SK-N-SH (cell line): ENCODE measurements at regions of chr2 and their contacts with region 1.

Region 1: GRCh38 chr2:164841719-164842623 is at the start of gene COBLL1:
- DNase-seq: peak; percentile 82
- H3K4me3 ChIP-seq: peak within 1 kb of the TSS; percentile 72 to 92
- H3K27ac ChIP-seq: peak within 1 kb of the TSS; percentile 81 to 85
- H3K4me1 ChIP-seq: peaks cover 8 to 10% of the 10 kb centered on the region in 2 experiments; a peak in 3 of 4 replicates
- H3K27me3 ChIP-seq: no peaks in the 10 kb centered on the region
- CTCF ChIP-seq: peak; percentile 80
- EP300 ChIP-seq: no peak
- RAD21 ChIP-seq: peak; percentile 50
- polyA plus RNA-seq, gene COBLL1: 3.1 and 4.9 TPM in 2 replicates

Region 2: DNA sequence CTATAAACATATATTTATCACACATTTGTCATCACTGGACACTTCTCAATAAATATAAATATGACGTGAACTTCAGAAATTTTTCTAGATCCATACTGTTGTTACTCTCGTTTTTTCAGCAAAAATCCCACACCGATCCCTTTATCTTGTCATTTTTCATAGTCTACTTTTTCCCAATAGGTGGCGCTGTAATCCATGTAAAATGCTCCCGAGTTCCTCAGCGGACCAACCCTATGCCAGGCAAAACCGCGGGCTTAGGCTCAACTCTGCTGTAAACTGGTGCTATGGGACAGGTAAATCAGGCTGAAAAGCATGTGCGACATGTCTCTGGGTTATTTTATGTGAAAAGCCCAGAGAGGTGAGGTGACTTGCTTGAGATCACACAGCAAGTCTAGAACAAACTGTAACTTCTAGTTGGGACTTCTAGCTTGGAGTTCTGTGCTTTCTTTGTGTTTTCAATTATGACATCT is 104.3 kb before region 1 on chr2:
- CTCF ChIA-PET with region 1: interaction called, 24 read pairs
- POLR2A ChIA-PET with region 1: no interaction called
- DNase-seq: peak; percentile 57
- H3K4me3 ChIP-seq: no peak overlapping the region; a peak in 1 of 4 replicates
- H3K27ac ChIP-seq: no peak overlapping the region
- H3K4me1 ChIP-seq: peaks cover 2 to 5% of the 10 kb centered on the region in 2 experiments; a peak in 2 of 4 replicates
- H3K27me3 ChIP-seq: no peaks in the 10 kb centered on the region
- CTCF ChIP-seq: peak; percentile 85
- EP300 ChIP-seq: no peak
- RAD21 ChIP-seq: peak; percentile 92

Region 3: DNA sequence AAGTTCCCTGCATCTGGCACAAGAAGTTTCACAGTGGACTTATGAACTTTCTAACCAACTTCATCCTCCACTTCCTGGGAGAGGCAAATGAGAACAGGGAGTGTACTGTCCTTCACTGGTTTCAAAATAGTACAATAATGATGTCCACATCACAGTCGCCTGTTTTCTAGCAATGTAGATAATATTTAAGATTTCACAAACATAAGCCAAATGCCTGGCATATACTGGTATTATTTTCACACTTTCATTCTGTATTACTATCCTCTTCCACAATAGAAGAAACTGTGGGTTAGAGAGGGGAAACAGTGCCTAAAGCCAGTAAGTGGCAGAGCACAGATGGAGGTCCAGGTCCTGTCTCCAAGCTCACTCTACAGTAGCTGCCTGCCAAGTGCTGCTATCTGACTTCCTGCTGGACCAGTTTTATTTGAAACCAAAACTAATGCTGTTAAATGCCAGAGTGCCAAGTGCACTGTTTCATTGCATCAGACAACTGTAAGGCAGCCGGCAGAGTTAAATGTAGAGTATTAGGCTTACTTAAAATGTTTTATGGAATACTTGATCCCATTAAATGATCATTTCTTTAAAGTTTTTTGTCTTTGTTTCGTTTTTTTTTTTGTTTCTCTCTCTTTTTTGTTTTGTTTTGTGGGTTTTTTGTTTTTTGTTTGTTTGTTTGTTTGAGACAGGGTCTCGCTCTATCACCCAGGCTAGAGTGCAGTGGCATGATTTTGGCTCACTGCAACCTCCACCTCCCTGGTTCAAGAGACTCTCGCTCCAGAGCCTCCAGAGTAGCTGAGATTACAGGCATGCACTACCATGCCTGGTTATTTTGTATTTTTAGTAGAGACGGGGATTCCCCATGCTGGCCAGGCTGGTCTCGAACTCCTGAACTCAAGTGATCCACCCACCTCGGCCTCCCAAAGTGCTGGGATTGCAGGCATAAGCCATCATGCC is 15.4 kb before region 1 on chr2:
- CTCF ChIA-PET with region 1: interaction called, 35 read pairs
- POLR2A ChIA-PET with region 1: interaction called, 3 read pairs
- DNase-seq: peak; percentile 71
- H3K4me3 ChIP-seq: peak overlapping the region in 1 of 2 experiments; percentile 27; a peak in 1 of 4 replicates
- H3K27ac ChIP-seq: peak overlapping the region; percentile 45 to 75; a peak in 3 of 4 replicates
- H3K4me1 ChIP-seq: peaks cover 8 to 28% of the 10 kb centered on the region in 2 experiments; a peak in 3 of 4 replicates
- H3K27me3 ChIP-seq: no peaks in the 10 kb centered on the region
- CTCF ChIP-seq: no peak
- EP300 ChIP-seq: peak in 1 of 2 experiments; percentile 86; a peak in 2 of 4 replicates
- RAD21 ChIP-seq: peak; percentile 34

Region 4: GRCh38 chr2:164859251-164859800 is 17.4 kb after region 1 on chr2:
- CTCF ChIA-PET with region 1: interaction called, 18 read pairs
- POLR2A ChIA-PET with region 1: no interaction called
- DNase-seq: no peak
- H3K4me3 ChIP-seq: no peak overlapping the region
- H3K27ac ChIP-seq: no peak overlapping the region
- H3K4me1 ChIP-seq: no peaks in the 10 kb centered on the region; a peak in 1 of 4 replicates
- H3K27me3 ChIP-seq: no peaks in the 10 kb centered on the region
- CTCF ChIP-seq: no peak
- EP300 ChIP-seq: no peak
- RAD21 ChIP-seq: no peak

Region 5: GRCh38 chr2:164896634-164897355 is 54.8 kb after region 1 on chr2:
- CTCF ChIA-PET with region 1: interaction called, 15 read pairs
- POLR2A ChIA-PET with region 1: no interaction called
- DNase-seq: no peak
- H3K4me3 ChIP-seq: no peak overlapping the region
- H3K27ac ChIP-seq: peak overlapping the region in 1 of 2 experiments; percentile 34; a peak in 1 of 4 replicates
- H3K4me1 ChIP-seq: peaks cover 0 to 13% of the 10 kb centered on the region in 2 experiments; a peak in 3 of 4 replicates
- H3K27me3 ChIP-seq: no peaks in the 10 kb centered on the region
- CTCF ChIP-seq: no peak
- EP300 ChIP-seq: no peak
- RAD21 ChIP-seq: no peak